ENCODE measurements at regions of chr12 and their contacts with region 1.

Region 1: DNA sequence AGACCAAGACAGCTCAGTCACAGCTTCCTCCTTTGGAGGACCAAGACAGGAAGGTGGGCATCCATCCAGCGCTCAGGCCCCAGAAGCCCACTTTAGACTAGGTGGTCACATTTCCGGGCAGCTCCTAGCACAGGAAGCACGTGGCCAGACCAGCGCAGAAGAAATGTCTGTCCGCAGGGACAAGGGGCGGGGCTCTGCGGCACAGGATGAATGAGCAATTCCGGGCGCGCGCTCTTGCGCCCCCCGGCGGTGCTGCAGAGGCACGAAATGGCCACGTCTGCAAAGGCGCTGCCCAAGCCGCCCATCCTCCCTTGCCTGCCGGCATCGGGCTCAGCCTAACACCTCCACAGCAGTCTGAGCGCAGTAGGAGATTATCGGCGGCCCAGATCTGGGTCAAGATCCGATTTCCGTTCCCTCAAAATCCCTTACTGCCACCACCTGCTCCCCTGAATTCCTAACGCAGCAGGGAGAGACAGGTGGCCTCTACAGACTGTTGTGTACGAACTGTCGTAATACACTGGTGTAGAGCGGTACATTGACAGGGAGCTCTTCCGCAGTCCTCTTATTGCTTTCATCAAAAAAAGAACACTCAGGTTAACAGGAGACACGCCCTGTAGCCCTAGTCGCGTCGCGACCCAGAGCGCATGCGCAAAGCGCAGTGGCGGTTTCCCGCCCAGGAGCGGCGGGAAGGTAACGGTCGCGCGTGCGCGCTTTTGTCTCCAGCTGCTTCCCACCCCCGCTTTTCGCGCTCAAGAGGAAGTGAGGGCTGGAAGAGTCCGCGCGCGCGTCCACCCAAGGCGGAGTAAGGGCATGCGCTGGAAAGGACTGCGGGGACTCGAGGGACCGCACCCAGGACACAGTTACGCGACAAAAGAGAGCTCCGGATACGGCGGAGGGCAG is 794 bp downstream of the TUBA1B start:
- DNase-seq: peak; percentile 93 to 95 (median 94)
- H3K4me3 ChIP-seq: peak overlapping the region; percentile 94 to 97
- H3K4me3 Mint-ChIP-seq: peak overlapping the region; percentile 97 to 99 (median 98)
- H3K27ac ChIP-seq: peak overlapping the region; percentile 94
- H3K27ac Mint-ChIP-seq: peak overlapping the region; percentile 98 to 99 (median 99)
- H3K4me1 ChIP-seq: peaks cover 42% of the 10 kb centered on the region
- H3K4me1 Mint-ChIP-seq: peaks cover 24 to 63% (median 36%) of the 10 kb centered on the region in 4 donors
- H3K27me3 ChIP-seq: no peaks in the 10 kb centered on the region
- H3K27me3 Mint-ChIP-seq: no peaks in the 10 kb centered on the region

Region 2: GRCh38 chr12:48716493-48717251 is 413.7 kb before region 1 on chr12 and contains the start of gene CCNT1:
- CTCF ChIA-PET with region 1: no interaction called
- POLR2A ChIA-PET with region 1: no interaction called
- intact Hi-C with region 1: no loop called
- DNase-seq: peak; percentile 98 to 100 (median 100)
- H3K4me3 ChIP-seq: peak within 1 kb of the TSS; percentile 87 to 98
- H3K4me3 Mint-ChIP-seq: peak within 1 kb of the TSS; percentile 89 to 99 (median 94)
- H3K27ac ChIP-seq: peak within 1 kb of the TSS; percentile 98
- H3K27ac Mint-ChIP-seq: peak within 1 kb of the TSS; percentile 90 to 100 (median 97)
- H3K4me1 ChIP-seq: peaks cover 40% of the 10 kb centered on the region
- H3K4me1 Mint-ChIP-seq: peaks cover 25 to 51% (median 37%) of the 10 kb centered on the region in 4 donors
- H3K27me3 ChIP-seq: no peaks in the 10 kb centered on the region
- H3K27me3 Mint-ChIP-seq: no peaks in the 10 kb centered on the region
- total RNA-seq, gene CCNT1: 67.0 to 69.5 TPM

Region 3: DNA sequence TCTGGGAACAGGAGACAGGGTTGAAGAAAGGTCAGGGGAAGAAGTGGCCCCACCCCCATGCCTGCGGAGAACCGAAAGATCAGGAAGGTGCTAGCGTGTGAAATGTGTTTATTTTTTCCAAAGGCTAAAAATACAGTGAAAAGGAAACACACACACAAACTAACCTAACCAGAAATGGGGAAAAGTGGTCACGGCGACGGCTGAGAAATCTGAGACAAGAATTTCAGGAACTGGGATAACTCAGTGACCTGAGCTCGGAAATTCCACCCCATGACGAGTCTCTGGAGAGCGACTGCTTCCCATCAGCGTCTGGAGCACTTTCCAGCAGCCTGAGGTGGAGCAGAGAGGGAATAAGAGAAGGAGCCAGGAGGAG is 248.1 kb before region 1 on chr12:
- CTCF ChIA-PET with region 1: no interaction called
- POLR2A ChIA-PET with region 1: no interaction called
- intact Hi-C with region 1: no loop called
- DNase-seq: no peak
- H3K4me3 ChIP-seq: no peak overlapping the region
- H3K4me3 Mint-ChIP-seq: no peak overlapping the region
- H3K27ac ChIP-seq: no peak overlapping the region
- H3K27ac Mint-ChIP-seq: no peak overlapping the region
- H3K4me1 ChIP-seq: no peaks in the 10 kb centered on the region
- H3K4me1 Mint-ChIP-seq: no peaks in the 10 kb centered on the region
- H3K27me3 ChIP-seq: no peaks in the 10 kb centered on the region
- H3K27me3 Mint-ChIP-seq: peaks cover 15 to 20% of the 10 kb centered on the region in 2 donors

Region 4: GRCh38 chr12:48977315-48978281 is 152.8 kb before region 1 on chr12:
- CTCF ChIA-PET with region 1: no interaction called
- POLR2A ChIA-PET with region 1: interaction called, 20 read pairs
- intact Hi-C with region 1: no loop called
- DNase-seq: peak; percentile 75 to 93 (median 80)
- H3K4me3 ChIP-seq: no peak overlapping the region
- H3K4me3 Mint-ChIP-seq: peak overlapping the region; percentile 48 to 80 (median 60)
- H3K27ac ChIP-seq: no peak overlapping the region
- H3K27ac Mint-ChIP-seq: peak overlapping the region; percentile 57 to 97 (median 83)
- H3K4me1 ChIP-seq: peaks cover 50% of the 10 kb centered on the region
- H3K4me1 Mint-ChIP-seq: peaks cover 35 to 65% (median 46%) of the 10 kb centered on the region in 4 donors
- H3K27me3 ChIP-seq: peaks cover 17% of the 10 kb centered on the region
- H3K27me3 Mint-ChIP-seq: peaks cover 11 to 26% of the 10 kb centered on the region in 2 donors

Region 5: DNA sequence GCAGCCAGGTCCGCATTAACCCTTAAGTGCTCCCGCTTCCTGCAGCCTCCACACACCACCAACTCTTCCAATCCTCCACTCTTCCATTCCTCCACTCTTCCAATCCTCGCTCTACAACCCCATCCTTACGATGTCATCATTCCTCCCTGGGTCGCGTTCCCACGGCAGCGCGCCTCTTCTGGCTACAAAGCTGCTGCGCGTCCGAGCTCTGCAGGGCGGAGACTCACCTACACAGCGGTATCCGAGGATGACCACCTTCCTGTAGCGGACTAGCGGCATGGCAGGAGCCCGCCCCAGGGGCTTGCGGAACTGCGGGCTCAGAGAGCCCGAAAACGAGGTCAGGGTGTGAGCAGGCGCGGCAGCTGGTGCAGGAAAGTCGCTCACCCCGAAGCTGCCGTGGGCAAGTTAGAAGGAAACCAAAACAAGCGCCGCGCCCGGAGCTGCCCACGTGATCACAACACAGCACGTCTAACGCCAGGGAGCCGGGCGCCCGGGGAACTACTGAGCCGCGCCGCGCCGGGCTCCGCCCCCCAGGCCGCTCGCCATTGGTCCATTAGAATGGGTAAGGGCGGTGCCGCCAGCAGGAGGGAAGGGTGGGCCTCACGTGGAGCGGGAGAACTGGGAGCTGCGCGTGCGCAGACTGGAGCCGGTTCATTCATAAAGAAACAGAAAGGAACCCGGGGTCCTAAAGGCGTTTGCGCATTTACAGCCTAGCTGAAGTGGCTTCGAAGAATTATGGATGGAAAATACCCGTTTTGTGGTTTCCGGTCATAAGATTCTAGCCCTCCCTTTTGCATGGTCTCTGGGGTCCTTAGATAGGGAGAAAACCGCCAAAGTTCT is 60.7 kb before region 1 on chr12 and contains the start of gene RHEBL1:
- CTCF ChIA-PET with region 1: interaction called, 15 read pairs
- POLR2A ChIA-PET with region 1: interaction called, 40 read pairs
- intact Hi-C with region 1: loop called (anchors 1 kb)
- DNase-seq: peak; percentile 96 to 98 (median 97)
- H3K4me3 ChIP-seq: peak within 1 kb of the TSS; percentile 69 to 77
- H3K4me3 Mint-ChIP-seq: peak within 1 kb of the TSS; percentile 92 to 99 (median 94)
- H3K27ac ChIP-seq: peak within 1 kb of the TSS; percentile 71
- H3K27ac Mint-ChIP-seq: peak within 1 kb of the TSS; percentile 87 to 98 (median 94)
- H3K4me1 ChIP-seq: peaks cover 13% of the 10 kb centered on the region
- H3K4me1 Mint-ChIP-seq: peaks cover 8 to 18% (median 15%) of the 10 kb centered on the region in 4 donors
- H3K27me3 ChIP-seq: no peaks in the 10 kb centered on the region
- H3K27me3 Mint-ChIP-seq: no peaks in the 10 kb centered on the region
- total RNA-seq, gene RHEBL1: 2.7 to 2.9 TPM

Region 6: GRCh38 chr12:49110464-49111155 is 19.8 kb before region 1 on chr12 and contains the start of gene LMBR1L:
- CTCF ChIA-PET with region 1: interaction called, 70 read pairs
- POLR2A ChIA-PET with region 1: interaction called, 189 read pairs
- intact Hi-C with region 1: loop called (anchors 1 kb)
- DNase-seq: peak; percentile 94 to 99 (median 97)
- H3K4me3 ChIP-seq: peak within 1 kb of the TSS; percentile 73 to 92
- H3K4me3 Mint-ChIP-seq: peak within 1 kb of the TSS; percentile 91 to 99 (median 98)
- H3K27ac ChIP-seq: peak within 1 kb of the TSS; percentile 88
- H3K27ac Mint-ChIP-seq: peak within 1 kb of the TSS; percentile 94 to 99 (median 98)
- H3K4me1 ChIP-seq: peaks cover 22% of the 10 kb centered on the region
- H3K4me1 Mint-ChIP-seq: peaks cover 25 to 48% (median 35%) of the 10 kb centered on the region in 4 donors
- H3K27me3 ChIP-seq: no peaks in the 10 kb centered on the region
- H3K27me3 Mint-ChIP-seq: no peaks in the 10 kb centered on the region
- total RNA-seq, gene LMBR1L: 222 to 226 TPM

Region 7: GRCh38 chr12:49200919-49201594 is 70.7 kb after region 1 on chr12:
- CTCF ChIA-PET with region 1: interaction called, 3 read pairs
- POLR2A ChIA-PET with region 1: interaction called, 11 read pairs
- intact Hi-C with region 1: no loop called
- DNase-seq: peak; percentile 38 to 59 (median 47)
- H3K4me3 ChIP-seq: no peak overlapping the region
- H3K4me3 Mint-ChIP-seq: peak overlapping the region in 3 of 8 donors; percentile 4 to 71 (median 6)
- H3K27ac ChIP-seq: no peak overlapping the region
- H3K27ac Mint-ChIP-seq: peak overlapping the region in 5 of 7 donors; percentile 27 to 62 (median 33)
- H3K4me1 ChIP-seq: peaks cover 14% of the 10 kb centered on the region
- H3K4me1 Mint-ChIP-seq: peaks cover 10 to 13% (median 12%) of the 10 kb centered on the region in 4 donors
- H3K27me3 ChIP-seq: no peaks in the 10 kb centered on the region
- H3K27me3 Mint-ChIP-seq: peaks cover under 1 to 6% of the 10 kb centered on the region in 2 donors

Region 8: DNA sequence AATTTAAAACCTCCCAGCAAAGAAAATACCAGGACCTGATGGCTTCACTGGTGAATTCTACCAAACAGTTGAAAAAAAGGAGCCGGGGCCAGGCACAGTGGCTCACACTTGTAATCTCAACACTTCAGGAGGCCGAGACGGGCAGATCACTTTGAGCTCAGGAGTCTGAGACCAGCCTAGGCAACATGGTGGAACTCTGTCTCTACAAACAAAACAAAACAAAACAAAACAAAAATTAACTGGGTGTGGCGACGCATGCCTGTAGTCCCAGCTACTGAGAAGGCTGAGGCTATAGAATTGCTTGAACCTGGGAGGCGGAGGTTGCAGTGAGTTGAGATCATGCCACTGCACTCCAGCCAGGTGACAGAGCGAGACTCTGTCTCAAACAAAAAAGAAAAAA is 179.0 kb after region 1 on chr12:
- CTCF ChIA-PET with region 1: no interaction called
- POLR2A ChIA-PET with region 1: no interaction called
- intact Hi-C with region 1: no loop called
- DNase-seq: no peak
- H3K4me3 ChIP-seq: no peak overlapping the region
- H3K4me3 Mint-ChIP-seq: no peak overlapping the region
- H3K27ac ChIP-seq: no peak overlapping the region
- H3K27ac Mint-ChIP-seq: no peak overlapping the region
- H3K4me1 ChIP-seq: no peaks in the 10 kb centered on the region
- H3K4me1 Mint-ChIP-seq: no peaks in the 10 kb centered on the region
- H3K27me3 ChIP-seq: no peaks in the 10 kb centered on the region
- H3K27me3 Mint-ChIP-seq: peaks cover 14 to 29% of the 10 kb centered on the region in 2 donors

Region 9: DNA sequence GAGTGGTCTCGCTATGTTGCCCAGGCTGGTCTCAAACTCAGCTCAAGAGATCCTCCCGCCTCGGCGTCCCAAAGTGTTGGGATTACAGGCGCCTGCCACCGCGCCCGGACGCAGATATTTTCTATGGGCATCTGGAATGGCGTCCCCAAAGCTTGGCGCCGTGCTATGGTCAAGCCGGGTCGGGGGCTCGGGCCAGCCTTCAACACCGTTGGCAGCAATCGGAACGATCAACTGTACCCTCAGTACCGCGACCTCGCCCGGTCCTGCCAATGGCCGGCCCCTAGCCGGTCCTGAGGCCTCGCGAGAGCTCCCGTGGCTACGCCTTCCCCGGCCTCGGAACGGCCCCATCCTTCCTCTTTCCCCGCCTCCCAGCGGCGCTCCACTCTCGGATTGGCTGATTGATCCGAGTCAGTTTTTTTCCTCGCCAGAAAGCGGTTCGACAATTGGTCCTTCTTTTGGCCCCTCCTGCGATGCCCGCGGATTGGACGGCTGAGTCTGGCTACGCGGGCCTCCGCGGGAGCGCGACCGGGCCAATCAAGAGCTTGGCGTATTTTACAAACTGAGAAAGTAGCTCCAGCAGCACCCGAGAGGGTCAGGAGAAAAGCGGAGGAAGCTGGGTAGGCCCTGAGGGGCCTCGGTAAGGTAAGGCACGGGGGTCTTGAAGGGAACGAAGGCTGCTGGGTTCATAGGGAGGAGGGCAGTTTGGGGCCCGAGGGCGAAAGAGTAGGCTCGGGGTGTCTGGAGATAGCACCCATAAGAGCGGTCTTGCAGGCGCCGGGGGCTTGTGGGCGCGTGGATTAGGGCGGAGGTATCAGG is 192.5 kb after region 1 on chr12 and contains the start of gene TROAP:
- CTCF ChIA-PET with region 1: interaction called, 3 read pairs
- POLR2A ChIA-PET with region 1: interaction called, 10 read pairs
- intact Hi-C with region 1: no loop called
- DNase-seq: peak; percentile 97 to 99 (median 97)
- H3K4me3 ChIP-seq: peak within 1 kb of the TSS; percentile 54 to 77
- H3K4me3 Mint-ChIP-seq: peak within 1 kb of the TSS; percentile 92 to 99 (median 96)
- H3K27ac ChIP-seq: peak within 1 kb of the TSS; percentile 51
- H3K27ac Mint-ChIP-seq: peak within 1 kb of the TSS; percentile 75 to 96 (median 91)
- H3K4me1 ChIP-seq: peaks cover 14% of the 10 kb centered on the region
- H3K4me1 Mint-ChIP-seq: peaks cover 14 to 24% (median 15%) of the 10 kb centered on the region in 4 donors
- H3K27me3 ChIP-seq: no peaks in the 10 kb centered on the region
- H3K27me3 Mint-ChIP-seq: no peaks in the 10 kb centered on the region
- total RNA-seq, gene TROAP: 0.26 to 0.80 TPM